ENCODE measurements at regions of chr19 and their contacts with region 1.

Region 1: GRCh38 chr19:6737284-6738046 is at the start of gene GPR108:
- DNase-seq: peak; percentile 100
- ATAC-seq: peak; percentile 75
- H3K4me3 Mint-ChIP-seq: peak within 1 kb of the TSS; percentile 98
- H3K27ac Mint-ChIP-seq: peak within 1 kb of the TSS; percentile 99
- H3K4me1 Mint-ChIP-seq: peaks cover 38% of the 10 kb centered on the region
- H3K27me3 Mint-ChIP-seq: no peaks in the 10 kb centered on the region
- CTCF ChIP-seq: no peak
- total RNA-seq, gene GPR108: 58.2 to 64.8 TPM

Region 2: DNA sequence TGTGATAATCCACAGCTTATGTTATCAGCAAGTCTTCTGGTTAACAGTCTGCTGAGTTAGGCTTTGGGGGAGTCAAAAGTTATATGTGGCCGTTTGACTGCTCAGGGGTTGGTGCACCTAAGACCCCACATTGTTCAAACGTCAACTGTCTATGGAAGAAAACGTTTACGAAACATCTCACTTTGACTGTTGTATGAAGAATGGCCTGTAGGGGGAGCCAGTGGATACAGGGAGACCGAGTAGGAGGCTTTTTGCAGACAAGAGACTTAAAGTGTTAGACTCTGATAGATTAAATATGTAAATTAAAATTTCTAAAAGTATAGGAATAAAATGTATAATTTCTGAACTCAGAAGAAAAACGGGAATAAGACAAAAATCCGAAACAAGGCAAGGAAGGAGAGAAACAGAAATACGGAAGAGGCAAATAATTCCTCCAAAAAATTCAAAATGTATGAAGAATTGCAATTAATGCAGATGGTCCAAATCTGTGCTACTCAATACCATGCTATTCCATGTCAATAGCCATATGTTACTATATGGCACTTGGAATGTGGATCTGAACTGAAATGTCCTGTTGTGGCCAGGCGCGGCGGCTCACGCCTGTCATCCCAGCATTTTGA is 105.4 kb before region 1 on chr19:
- CTCF ChIA-PET with region 1: interaction called, 22 read pairs
- POLR2A ChIA-PET with region 1: no interaction called
- intact Hi-C with region 1: no loop called
- DNase-seq: peak; percentile 92
- ATAC-seq: peak; percentile 89
- H3K4me3 Mint-ChIP-seq: no peak overlapping the region
- H3K27ac Mint-ChIP-seq: no peak overlapping the region
- H3K4me1 Mint-ChIP-seq: peaks cover 26% of the 10 kb centered on the region
- H3K27me3 Mint-ChIP-seq: peaks cover 4% of the 10 kb centered on the region
- CTCF ChIP-seq: peak; percentile 81

Region 3: GRCh38 chr19:6668691-6669090 is 68.8 kb before region 1 on chr19:
- CTCF ChIA-PET with region 1: interaction called, 12 read pairs
- POLR2A ChIA-PET with region 1: interaction called, 15 read pairs
- intact Hi-C with region 1: loop called (anchors 5 kb)
- DNase-seq: peak; percentile 65
- ATAC-seq: no peak
- H3K4me3 Mint-ChIP-seq: peak overlapping the region; percentile 99
- H3K27ac Mint-ChIP-seq: peak overlapping the region; percentile 100
- H3K4me1 Mint-ChIP-seq: peaks cover 34% of the 10 kb centered on the region
- H3K27me3 Mint-ChIP-seq: no peaks in the 10 kb centered on the region
- CTCF ChIP-seq: no peak

Region 4: GRCh38 chr19:6767357-6768235 is 30.1 kb after region 1 on chr19 and contains the start of gene SH2D3A:
- CTCF ChIA-PET with region 1: interaction called, 19 read pairs
- POLR2A ChIA-PET with region 1: interaction called, 7 read pairs
- intact Hi-C with region 1: loop called (anchors 2 kb)
- DNase-seq: peak; percentile 98
- ATAC-seq: peak; percentile 78
- H3K4me3 Mint-ChIP-seq: peak within 1 kb of the TSS; percentile 93
- H3K27ac Mint-ChIP-seq: peak within 1 kb of the TSS; percentile 94
- H3K4me1 Mint-ChIP-seq: peaks cover 35% of the 10 kb centered on the region
- H3K27me3 Mint-ChIP-seq: no peaks in the 10 kb centered on the region
- CTCF ChIP-seq: no peak
- total RNA-seq, gene SH2D3A: 20.6 to 20.9 TPM

Region 5: GRCh38 chr19:6794686-6795431 is 57.4 kb after region 1 on chr19:
- CTCF ChIA-PET with region 1: no interaction called
- POLR2A ChIA-PET with region 1: no interaction called
- intact Hi-C with region 1: no loop called
- DNase-seq: no peak
- ATAC-seq: peak; percentile 43
- H3K4me3 Mint-ChIP-seq: no peak overlapping the region
- H3K27ac Mint-ChIP-seq: peak overlapping the region; percentile 66
- H3K4me1 Mint-ChIP-seq: peaks cover 74% of the 10 kb centered on the region
- H3K27me3 Mint-ChIP-seq: no peaks in the 10 kb centered on the region
- CTCF ChIP-seq: no peak

Region 6: GRCh38 chr19:6868351-6868750 is 130.9 kb after region 1 on chr19:
- CTCF ChIA-PET with region 1: interaction called, 73 read pairs
- POLR2A ChIA-PET with region 1: interaction called, 14 read pairs
- intact Hi-C with region 1: loop called (anchors 1 kb)
- DNase-seq: no peak
- ATAC-seq: no peak
- H3K4me3 Mint-ChIP-seq: no peak overlapping the region
- H3K27ac Mint-ChIP-seq: no peak overlapping the region
- H3K4me1 Mint-ChIP-seq: peaks cover 8% of the 10 kb centered on the region
- H3K27me3 Mint-ChIP-seq: no peaks in the 10 kb centered on the region
- CTCF ChIP-seq: no peak

Measured in activated CD8-positive, alpha-beta T cell treated with anti-CD3 and anti-CD28 coated beads for 36 hours (primary cell).